ENCODE measurements at regions of chr20 and their contacts with region 1.

Region 1: GRCh38 chr20:50484276-50484976 is 25.8 kb upstream of the PTPN1 start:
- DNase-seq: no peak
- ATAC-seq: no peak
- H3K4me3 ChIP-seq: no peak overlapping the region
- H3K27ac ChIP-seq: peak overlapping the region; percentile 87
- H3K4me1 ChIP-seq: peaks cover 8 to 35% of the 10 kb centered on the region in 2 experiments; a peak in 4 of 5 replicates
- H3K27me3 ChIP-seq: no peaks in the 10 kb centered on the region
- CTCF ChIP-seq: peak in 1 of 3 experiments; percentile 28; a peak in 2 of 6 replicates
- EP300 ChIP-seq: no peak
- POLR2A ChIP-seq: no peak
- RAD21 ChIP-seq: 0 out of 4 replicates have a peak, but pooled peaks of 1 of the 2 experiments have one; percentile 9

Region 2: GRCh38 chr20:50504231-50504823 is 19.9 kb after region 1 on chr20:
- CTCF ChIA-PET with region 1: no interaction called
- POLR2A ChIA-PET with region 1: interaction called, 12 read pairs
- in situ Hi-C with region 1: no loop called
- intact Hi-C with region 1: no loop called
- DNase-seq: peak; percentile 45 to 67 (median 50)
- ATAC-seq: peak; percentile 60
- H3K4me3 ChIP-seq: no peak overlapping the region
- H3K27ac ChIP-seq: peak overlapping the region; percentile 23; the same call in 2 of the 3 replicates
- H3K4me1 ChIP-seq: peaks cover 5 to 31% of the 10 kb centered on the region in 2 experiments
- H3K27me3 ChIP-seq: no peaks in the 10 kb centered on the region
- CTCF ChIP-seq: peak; percentile 21 to 56 (median 22); a peak in 3 of 6 replicates
- EP300 ChIP-seq: peak; percentile 51; the same call in 1 of the 2 replicates
- POLR2A ChIP-seq: no peak
- RAD21 ChIP-seq: peak; percentile 50 to 74